Naive thymus-derived CD4-positive, alpha-beta T cell (primary cell): ENCODE measurements at regions of chr1 and their contacts with region 1.

Region 1: DNA sequence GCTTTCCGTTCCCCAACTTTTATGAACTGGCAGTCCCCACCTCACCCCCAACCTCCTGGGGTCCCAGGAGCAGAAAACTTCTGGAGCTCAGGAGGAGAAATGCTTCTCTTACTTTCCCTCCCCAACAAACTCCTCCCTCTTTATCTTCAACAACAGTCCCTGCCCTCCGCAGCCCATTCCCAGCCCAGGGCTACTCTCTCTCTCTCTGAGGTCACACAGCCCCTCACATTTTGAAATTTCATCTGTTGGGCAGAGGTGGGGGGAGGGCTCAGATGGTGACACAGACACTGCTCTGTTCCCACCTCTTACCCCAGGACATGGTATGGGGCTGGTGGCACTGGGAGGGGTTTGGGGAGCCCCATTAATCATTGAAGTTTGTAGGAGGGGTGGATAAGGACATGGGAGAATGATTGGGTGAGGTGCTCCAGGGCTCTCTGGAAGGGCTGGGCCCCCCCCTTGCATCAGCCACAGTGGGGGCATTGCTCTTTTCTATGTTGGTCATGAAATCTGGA is 6.0 kb downstream of the PIK3CD start:
- DNase-seq: peak in 1 of 9 donors; percentile 28
- ATAC-seq: no peak
- H3K4me3 ChIP-seq: no peak overlapping the region
- H3K4me3 Mint-ChIP-seq: peak overlapping the region; percentile 56 to 99 (median 88)
- H3K27ac ChIP-seq: peak overlapping the region; percentile 79
- H3K27ac Mint-ChIP-seq: peak overlapping the region; percentile 64 to 95 (median 93)
- H3K4me1 ChIP-seq: peaks cover 45 to 47% of the 10 kb centered on the region in 2 donors
- H3K4me1 Mint-ChIP-seq: peaks cover 30 to 80% (median 74%) of the 10 kb centered on the region in 7 donors
- H3K27me3 ChIP-seq: no peaks in the 10 kb centered on the region
- H3K27me3 Mint-ChIP-seq: no peaks in the 10 kb centered on the region

Region 2: GRCh38 chr1:9671377-9672140 is 14.0 kb after region 1 on chr1:
- CTCF ChIA-PET with region 1: interaction called, 6 read pairs
- POLR2A ChIA-PET with region 1: interaction called, 63 read pairs
- intact Hi-C with region 1: loop called (anchors 2 kb)
- DNase-seq: no peak
- ATAC-seq: no peak
- H3K4me3 ChIP-seq: no peak overlapping the region
- H3K4me3 Mint-ChIP-seq: peak overlapping the region in 6 of 10 donors; percentile 29 to 48 (median 38)
- H3K27ac ChIP-seq: peak overlapping the region; percentile 34
- H3K27ac Mint-ChIP-seq: peak overlapping the region; percentile 2 to 87 (median 60)
- H3K4me1 ChIP-seq: peaks cover 28 to 34% of the 10 kb centered on the region in 2 donors
- H3K4me1 Mint-ChIP-seq: peaks cover 42 to 81% (median 71%) of the 10 kb centered on the region in 7 donors
- H3K27me3 ChIP-seq: no peaks in the 10 kb centered on the region
- H3K27me3 Mint-ChIP-seq: no peaks in the 10 kb centered on the region